ENCODE measurements at regions of chr15 and their contacts with region 1.

Region 1: GRCh38 chr15:95590533-95591044 is 739.9 kb upstream of the NR2F2 start:
- DNase-seq: no peak
- H3K4me3 ChIP-seq: no peak overlapping the region
- H3K27ac ChIP-seq: peak overlapping the region; percentile 66 to 75
- H3K4me1 ChIP-seq: peaks cover 0 to 28% (median 6%) of the 10 kb centered on the region in 4 donors
- H3K27me3 ChIP-seq: no peaks in the 10 kb centered on the region
- CTCF ChIP-seq: no peak

Region 2: GRCh38 chr15:95626501-95627361 is 36.1 kb after region 1 on chr15:
- intact Hi-C with region 1: loop called (anchors 1 kb)
- DNase-seq: no peak
- H3K4me3 ChIP-seq: no peak overlapping the region
- H3K27ac ChIP-seq: no peak overlapping the region
- H3K4me1 ChIP-seq: peaks cover 0 to 28% (median 7%) of the 10 kb centered on the region in 4 donors
- H3K27me3 ChIP-seq: no peaks in the 10 kb centered on the region
- CTCF ChIP-seq: no peak